ENCODE measurements at regions of chr9 and their contacts with region 1.

Region 1: DNA sequence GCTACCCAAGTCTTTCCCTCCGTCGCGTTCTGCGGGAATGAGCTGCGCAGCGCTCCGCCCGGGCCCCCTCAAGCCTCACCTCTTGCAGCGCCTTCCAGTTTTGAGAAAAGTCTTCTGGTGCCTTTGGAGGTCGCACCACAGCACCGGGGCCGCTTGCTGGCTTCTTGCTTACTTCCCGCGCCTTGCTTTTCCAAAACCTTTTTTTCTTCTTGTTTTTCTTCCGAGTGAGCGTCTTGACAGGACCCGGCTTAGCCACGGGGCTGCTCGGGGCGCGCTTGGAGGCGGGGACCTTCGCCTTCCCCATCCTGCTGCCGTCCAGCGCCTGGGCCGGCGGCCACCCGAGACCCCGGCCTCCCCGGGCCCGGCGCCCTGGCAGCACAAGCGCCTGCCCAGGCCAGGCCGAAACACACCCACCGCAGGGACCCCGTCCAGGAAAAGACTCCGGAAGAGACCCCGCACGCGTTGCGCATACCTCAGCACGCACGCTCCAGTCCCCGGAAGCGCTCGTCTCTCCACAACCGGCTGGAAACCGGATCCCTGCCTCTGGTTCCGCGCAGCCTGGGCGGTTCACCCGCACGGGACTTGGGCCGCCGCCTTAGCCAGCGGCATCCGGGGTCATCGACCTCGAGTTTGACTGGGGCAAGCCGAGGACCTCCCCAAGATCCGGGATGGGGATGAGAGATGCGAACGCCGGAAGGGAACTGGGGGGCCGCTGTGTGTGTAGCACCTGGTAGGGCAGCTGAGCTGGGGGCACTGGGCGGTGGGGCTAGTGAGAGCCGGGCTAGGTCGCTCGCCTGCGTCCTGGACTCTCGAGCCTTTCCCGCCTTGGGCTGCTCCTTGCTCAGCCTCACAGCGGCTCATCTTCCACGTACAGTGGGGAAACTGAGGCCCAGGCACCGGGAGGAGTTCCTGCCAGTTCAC is at the start of gene REXO4:
- DNase-seq: peak; percentile 86 to 95
- H3K4me3 ChIP-seq: peak within 1 kb of the TSS; percentile 83 to 96 (median 92)
- H3K27ac ChIP-seq: peak within 1 kb of the TSS; percentile 92
- H3K4me1 ChIP-seq: peaks cover 0 to 20% (median 5%) of the 10 kb centered on the region in 4 experiments; a peak in 4 of 7 replicates
- H3K27me3 ChIP-seq: no peaks in the 10 kb centered on the region; a peak in 1 of 7 replicates
- CTCF ChIP-seq: no peak
- EP300 ChIP-seq: no peak
- POLR2A ChIP-seq: peak in 1 of 2 experiments; percentile 58; a peak in 2 of 3 replicates
- RAD21 ChIP-seq: no peak
- total RNA-seq, gene REXO4: 37.7 and 38.3 TPM in 2 replicates

Region 2: GRCh38 chr9:133375724-133376654 is 41.8 kb before region 1 on chr9 and contains the starts of genes STKLD1 and SURF4:
- CTCF ChIA-PET with region 1: interaction called, 4 read pairs
- POLR2A ChIA-PET with region 1: interaction called, 12 read pairs
- DNase-seq: peak; percentile 81 to 99
- H3K4me3 ChIP-seq: peak within 1 kb of the TSS; percentile 70 to 87 (median 74)
- H3K27ac ChIP-seq: peak within 1 kb of the TSS; percentile 80
- H3K4me1 ChIP-seq: peaks cover 0 to 5% (median 0%) of the 10 kb centered on the region in 4 experiments; a peak in 1 of 7 replicates
- H3K27me3 ChIP-seq: peaks cover 0 to 11% (median 6%) of the 10 kb centered on the region in 4 experiments; a peak in 5 of 7 replicates
- CTCF ChIP-seq: no peak
- EP300 ChIP-seq: peak in 1 of 2 experiments; percentile 52; a peak in 1 of 3 replicates
- POLR2A ChIP-seq: peak in 1 of 2 experiments; percentile 82; a peak in 2 of 3 replicates
- RAD21 ChIP-seq: no peak
- total RNA-seq, gene STKLD1: not detected in 2 replicates
- total RNA-seq, gene SURF4: 167 and 182 TPM in 2 replicates

Region 3: GRCh38 chr9:133396952-133397351 is 20.8 kb before region 1 on chr9:
- CTCF ChIA-PET with region 1: interaction called, 10 read pairs
- POLR2A ChIA-PET with region 1: interaction called, 31 read pairs
- DNase-seq: peak in 1 of 2 experiments; percentile 81
- H3K4me3 ChIP-seq: no peak overlapping the region
- H3K27ac ChIP-seq: no peak overlapping the region
- H3K4me1 ChIP-seq: no peaks in the 10 kb centered on the region
- H3K27me3 ChIP-seq: no peaks in the 10 kb centered on the region; a peak in 3 of 7 replicates
- CTCF ChIP-seq: peak in 2 of 3 experiments; percentile 76 to 87; a peak in 3 of 4 replicates
- EP300 ChIP-seq: no peak
- POLR2A ChIP-seq: no peak
- RAD21 ChIP-seq: peak; percentile 53 to 58

Region 4: GRCh38 chr9:133429641-133430161 is 11.9 kb after region 1 on chr9:
- CTCF ChIA-PET with region 1: interaction called, 7 read pairs
- POLR2A ChIA-PET with region 1: interaction called, 19 read pairs
- DNase-seq: peak in 1 of 2 experiments; percentile 88
- H3K4me3 ChIP-seq: peak overlapping the region; percentile 39 to 65 (median 44)
- H3K27ac ChIP-seq: no peak overlapping the region
- H3K4me1 ChIP-seq: peaks cover 0 to 4% (median under 1%) of the 10 kb centered on the region in 4 experiments; a peak in 3 of 7 replicates
- H3K27me3 ChIP-seq: peaks cover 0 to 11% (median 4%) of the 10 kb centered on the region in 4 experiments; a peak in 5 of 7 replicates
- CTCF ChIP-seq: peak in 2 of 3 experiments; percentile 55 to 68; a peak in 3 of 4 replicates
- EP300 ChIP-seq: no peak
- POLR2A ChIP-seq: no peak
- RAD21 ChIP-seq: peak; percentile 1 to 29; a peak in 2 of 4 replicates

Region 5: DNA sequence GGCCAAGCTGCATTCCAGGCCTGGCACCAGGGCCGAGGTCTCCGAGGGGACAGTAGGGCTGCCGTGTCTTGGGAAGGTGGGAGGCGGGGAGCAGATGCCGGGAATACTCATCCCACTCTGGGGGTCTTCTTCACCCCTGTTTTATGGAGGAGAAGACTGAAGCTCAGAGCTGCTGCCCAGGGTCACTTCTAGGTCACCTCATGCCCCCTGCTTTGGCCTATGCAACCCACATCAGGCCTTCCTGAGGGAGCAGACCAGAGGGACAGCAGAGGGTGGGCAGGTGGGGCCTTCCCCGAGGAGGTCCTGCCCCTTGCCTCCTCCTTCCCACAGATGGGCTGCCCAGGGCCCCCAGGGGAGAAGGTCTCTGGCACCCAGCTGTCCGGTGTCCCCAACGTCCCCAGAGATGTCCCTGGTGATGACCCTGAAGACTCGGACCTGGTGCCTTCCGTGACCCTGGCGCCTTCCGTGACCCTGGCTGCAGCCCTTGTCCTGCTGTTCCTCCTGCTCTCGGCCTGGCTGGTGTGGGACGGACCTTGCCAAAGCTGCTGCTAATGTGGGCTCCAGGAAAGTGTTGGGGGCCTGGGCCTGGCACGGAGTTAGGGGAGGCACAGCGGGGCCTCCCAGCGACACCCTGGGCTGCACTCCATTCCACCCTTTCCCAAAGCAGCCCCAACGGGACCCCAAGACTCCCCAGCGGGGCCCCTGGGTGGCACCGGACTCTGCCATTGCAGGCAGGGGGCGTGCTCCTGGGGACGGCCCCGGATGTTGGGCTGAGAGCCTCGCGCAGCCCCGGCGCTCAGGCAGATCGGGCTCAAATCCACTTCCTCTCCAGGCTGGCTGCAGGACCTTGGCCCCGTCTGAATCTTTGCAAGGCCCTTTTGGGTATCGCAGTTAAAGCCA is 67.8 kb after region 1 on chr9:
- CTCF ChIA-PET with region 1: interaction called, 12 read pairs
- POLR2A ChIA-PET with region 1: interaction called, 3 read pairs
- DNase-seq: no peak
- H3K4me3 ChIP-seq: no peak overlapping the region
- H3K27ac ChIP-seq: no peak overlapping the region
- H3K4me1 ChIP-seq: no peaks in the 10 kb centered on the region; a peak in 1 of 7 replicates
- H3K27me3 ChIP-seq: no peaks in the 10 kb centered on the region; a peak in 1 of 7 replicates
- CTCF ChIP-seq: no peak
- EP300 ChIP-seq: no peak
- POLR2A ChIP-seq: no peak
- RAD21 ChIP-seq: no peak